Mammary epithelial cell (primary cell): ENCODE measurements at regions of chr10 and their contacts with region 1.

Region 1: DNA sequence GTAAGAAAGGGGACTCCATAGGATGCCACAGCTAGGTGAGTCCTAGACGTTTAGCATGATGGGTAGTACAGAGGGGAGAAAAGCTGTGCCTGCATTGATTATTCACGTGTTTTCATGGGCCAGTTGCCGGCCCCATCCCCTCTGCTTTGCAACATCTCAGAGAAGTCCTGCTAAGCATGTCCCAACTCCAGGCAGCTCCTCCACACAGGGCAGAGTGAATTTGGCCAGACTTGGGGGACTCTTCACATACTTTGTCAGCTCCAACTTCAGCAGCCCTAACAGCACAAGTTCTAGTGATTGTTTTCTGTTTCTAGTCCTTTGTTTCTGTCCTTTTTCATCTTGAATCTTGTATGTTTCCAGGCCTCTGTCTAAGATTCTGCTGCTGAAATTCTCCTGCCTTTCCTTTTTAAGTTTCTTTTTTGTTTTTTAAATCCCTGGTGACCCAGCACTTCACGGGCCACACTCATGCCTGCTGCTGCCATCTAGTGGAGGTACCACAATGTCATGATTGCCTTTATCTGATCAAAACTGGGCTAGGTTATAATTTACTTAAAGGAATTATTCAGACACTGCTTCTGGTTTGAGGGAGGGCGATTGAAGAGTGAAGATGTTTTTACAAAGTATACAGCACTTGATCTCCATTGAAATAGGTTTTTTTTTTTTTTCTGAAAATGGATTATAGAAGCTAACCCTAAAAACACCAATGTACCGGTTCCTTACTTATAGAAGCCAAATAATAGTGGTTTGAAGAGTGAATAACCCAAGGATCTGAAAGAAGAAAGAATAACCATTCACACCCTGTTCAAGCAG is 276.9 kb downstream of the CSTF2T start:
- DNase-seq: peak; percentile 14
- H3K4me3 ChIP-seq: no peak overlapping the region
- H3K27ac ChIP-seq: no peak overlapping the region
- H3K4me1 ChIP-seq: no peaks in the 10 kb centered on the region
- H3K27me3 ChIP-seq: no peaks in the 10 kb centered on the region
- CTCF ChIP-seq: peak; percentile 80 to 81

Region 2: GRCh38 chr10:51063659-51064535 is 358.6 kb before region 1 on chr10:
- CTCF ChIA-PET with region 1: no interaction called
- dilution Hi-C with region 1: no loop called
- in situ Hi-C with region 1: loop called (anchors 10 kb)
- intact Hi-C with region 1: loop called (anchors 1 kb)
- DNase-seq: peak; percentile 15
- H3K4me3 ChIP-seq: no peak overlapping the region
- H3K27ac ChIP-seq: no peak overlapping the region
- H3K4me1 ChIP-seq: no peaks in the 10 kb centered on the region
- H3K27me3 ChIP-seq: no peaks in the 10 kb centered on the region
- CTCF ChIP-seq: peak; percentile 56 to 61

Region 3: DNA sequence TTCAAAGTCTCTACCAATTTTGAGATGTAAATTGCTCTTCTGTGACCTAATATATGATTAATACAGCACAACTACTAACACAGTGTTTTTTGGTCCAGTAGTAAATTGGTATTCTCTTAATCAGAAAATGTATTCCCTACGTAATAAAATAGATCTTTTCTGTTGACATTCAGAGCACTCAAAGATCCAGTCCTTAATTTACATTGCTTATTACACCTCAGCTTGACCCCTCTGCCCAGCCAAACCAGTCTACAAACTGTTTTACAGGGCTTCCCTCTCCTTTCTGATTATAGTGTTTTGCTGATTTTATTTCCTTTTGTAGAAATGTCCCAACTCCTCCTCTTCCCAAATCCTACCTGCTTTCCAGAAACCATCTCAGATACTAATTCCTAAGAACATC is 54.8 kb before region 1 on chr10:
- CTCF ChIA-PET with region 1: no interaction called
- dilution Hi-C with region 1: no loop called
- in situ Hi-C with region 1: no loop called
- intact Hi-C with region 1: no loop called
- DNase-seq: no peak
- H3K4me3 ChIP-seq: no peak overlapping the region
- H3K27ac ChIP-seq: no peak overlapping the region
- H3K4me1 ChIP-seq: no peaks in the 10 kb centered on the region
- H3K27me3 ChIP-seq: no peaks in the 10 kb centered on the region
- CTCF ChIP-seq: no peak

Region 4: GRCh38 chr10:51377932-51378599 is 44.5 kb before region 1 on chr10:
- CTCF ChIA-PET with region 1: no interaction called
- dilution Hi-C with region 1: loop called (anchors 5 kb)
- in situ Hi-C with region 1: no loop called
- intact Hi-C with region 1: no loop called
- DNase-seq: no peak
- H3K4me3 ChIP-seq: no peak overlapping the region
- H3K27ac ChIP-seq: no peak overlapping the region
- H3K4me1 ChIP-seq: no peaks in the 10 kb centered on the region
- H3K27me3 ChIP-seq: no peaks in the 10 kb centered on the region
- CTCF ChIP-seq: no peak